CD4-positive, alpha-beta T cell (primary cell): ENCODE measurements at regions of chr7 and their contacts with region 1.

Region 1: DNA sequence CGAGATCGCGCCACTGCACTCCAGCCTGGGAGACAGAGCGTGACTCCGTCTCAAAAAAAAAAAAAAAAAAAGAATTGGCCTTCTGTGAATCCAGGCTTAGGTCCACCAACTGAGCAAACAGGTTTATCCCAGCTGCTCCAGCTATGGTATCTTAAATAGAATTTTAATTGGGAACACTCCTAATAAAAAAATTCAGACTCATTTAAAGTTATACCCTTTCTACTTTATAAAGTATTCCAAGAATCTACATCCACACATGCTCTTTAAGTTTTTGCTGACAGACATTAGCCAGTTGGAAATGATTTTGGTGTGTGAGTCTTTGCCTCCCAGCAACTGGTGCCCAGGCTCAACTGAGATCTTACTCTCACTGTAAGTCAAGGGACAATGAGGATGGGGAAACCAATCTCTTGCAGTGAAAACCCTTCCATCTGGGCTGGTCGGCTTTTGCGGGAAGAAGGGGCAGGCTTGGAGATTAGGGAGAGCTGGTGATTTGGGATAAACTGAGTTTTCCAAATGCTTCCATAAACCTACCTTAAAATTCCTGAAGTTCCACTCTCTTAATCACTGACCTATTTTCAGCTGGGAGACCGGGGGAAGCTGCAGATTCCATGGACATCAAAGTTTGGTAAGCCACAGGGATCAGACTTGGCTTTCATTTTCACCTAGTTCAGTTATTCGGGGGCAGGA is 89.2 kb upstream of the ZNF746 start:
- DNase-seq: no peak
- ATAC-seq: no peak
- H3K4me3 ChIP-seq: no peak overlapping the region
- H3K4me3 Mint-ChIP-seq: no peak overlapping the region
- H3K27ac ChIP-seq: no peak overlapping the region
- H3K27ac Mint-ChIP-seq: no peak overlapping the region
- H3K4me1 ChIP-seq: no peaks in the 10 kb centered on the region
- H3K4me1 Mint-ChIP-seq: peaks cover 14% of the 10 kb centered on the region
- H3K27me3 ChIP-seq: no peaks in the 10 kb centered on the region
- H3K27me3 Mint-ChIP-seq: no peaks in the 10 kb centered on the region
- CTCF ChIP-seq: no peak

Region 2: GRCh38 chr7:149611324-149611651 is 24.5 kb after region 1 on chr7:
- CTCF ChIA-PET with region 1: no interaction called
- POLR2A ChIA-PET with region 1: no interaction called
- intact Hi-C with region 1: loop called in 1 of 2 experiments (anchors 2 kb)
- DNase-seq: no peak
- ATAC-seq: no peak
- H3K4me3 ChIP-seq: no peak overlapping the region
- H3K4me3 Mint-ChIP-seq: no peak overlapping the region
- H3K27ac ChIP-seq: no peak overlapping the region
- H3K27ac Mint-ChIP-seq: no peak overlapping the region
- H3K4me1 ChIP-seq: no peaks in the 10 kb centered on the region
- H3K4me1 Mint-ChIP-seq: peaks cover 6% of the 10 kb centered on the region
- H3K27me3 ChIP-seq: no peaks in the 10 kb centered on the region
- H3K27me3 Mint-ChIP-seq: no peaks in the 10 kb centered on the region
- CTCF ChIP-seq: no peak